Sigmoid colon (tissue), 7 donors: ENCODE measurements at regions of chrX and their contacts with region 1.

Region 1: GRCh38 chrX:119655125-119655524 is 37.8 kb downstream of the SEPTIN6 start:
- DNase-seq: no peak
- H3K4me3 ChIP-seq: no peak overlapping the region
- H3K27ac ChIP-seq: peak overlapping the region in 3 of 4 donors; percentile 63 to 67 (median 66)
- H3K4me1 ChIP-seq: peaks cover 0 to 13% (median 5%) of the 10 kb centered on the region in 4 donors
- H3K27me3 ChIP-seq: no peaks in the 10 kb centered on the region
- CTCF ChIP-seq: no peak
- EP300 ChIP-seq: no peak
- POLR2A ChIP-seq: no peak

Region 2: DNA sequence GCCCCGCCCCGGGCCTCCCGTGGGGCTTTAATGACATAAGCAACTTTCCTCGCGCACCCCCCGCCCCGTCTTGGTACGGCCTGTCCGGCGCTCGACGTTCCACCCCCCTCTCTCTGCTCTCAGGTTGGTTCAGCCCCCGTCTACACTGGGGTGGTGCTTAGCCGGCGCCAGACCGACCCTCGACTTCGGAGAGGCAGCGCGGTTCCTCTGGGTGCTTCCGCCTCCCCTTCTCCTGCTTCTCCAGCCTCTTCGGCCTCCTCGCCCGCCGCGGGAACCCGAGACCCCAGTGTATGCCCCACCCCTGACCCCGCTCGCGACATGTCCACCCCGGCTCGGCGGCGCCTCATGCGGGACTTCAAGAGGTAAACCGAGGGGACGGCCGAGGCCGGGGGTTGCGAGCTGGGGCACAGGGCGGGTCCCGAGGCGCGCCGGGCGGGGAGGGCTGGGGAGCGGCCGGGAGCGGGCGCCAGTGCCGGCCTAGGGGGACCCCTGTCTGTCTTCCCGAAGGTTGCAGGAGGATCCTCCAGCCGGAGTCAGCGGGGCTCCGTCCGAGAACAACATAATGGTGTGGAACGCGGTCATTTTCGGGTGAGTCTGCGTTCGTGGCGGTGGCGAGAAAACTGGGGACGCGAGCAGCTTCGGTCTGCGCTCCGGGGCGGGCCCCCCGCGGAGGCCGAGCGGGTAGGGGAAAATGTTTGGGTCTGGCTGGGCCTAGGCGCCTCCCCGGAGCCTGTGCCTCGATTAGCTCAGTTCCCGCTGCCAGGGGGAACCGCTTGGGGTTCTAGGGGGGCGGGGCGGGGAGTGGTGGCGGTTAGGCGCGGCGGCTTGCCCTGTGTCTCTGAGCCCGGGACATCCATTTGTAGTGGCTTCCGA is 80.5 kb before region 1 on chrX and contains the start of gene UBE2A:
- intact Hi-C with region 1: no loop called
- DNase-seq: peak; percentile 96
- H3K4me3 ChIP-seq: peak within 1 kb of the TSS; percentile 58 to 71 (median 68)
- H3K27ac ChIP-seq: peak within 1 kb of the TSS; percentile 89 to 96 (median 92)
- H3K4me1 ChIP-seq: peaks cover 0 to 15% (median 10%) of the 10 kb centered on the region in 4 donors
- H3K27me3 ChIP-seq: no peaks in the 10 kb centered on the region
- CTCF ChIP-seq: peak in 2 of 4 experiments; percentile 12 to 47
- EP300 ChIP-seq: no peak
- POLR2A ChIP-seq: peak; percentile 56 to 79
- total RNA-seq, gene UBE2A: 26.7 to 51.7 (median 43.1) TPM

Region 3: DNA sequence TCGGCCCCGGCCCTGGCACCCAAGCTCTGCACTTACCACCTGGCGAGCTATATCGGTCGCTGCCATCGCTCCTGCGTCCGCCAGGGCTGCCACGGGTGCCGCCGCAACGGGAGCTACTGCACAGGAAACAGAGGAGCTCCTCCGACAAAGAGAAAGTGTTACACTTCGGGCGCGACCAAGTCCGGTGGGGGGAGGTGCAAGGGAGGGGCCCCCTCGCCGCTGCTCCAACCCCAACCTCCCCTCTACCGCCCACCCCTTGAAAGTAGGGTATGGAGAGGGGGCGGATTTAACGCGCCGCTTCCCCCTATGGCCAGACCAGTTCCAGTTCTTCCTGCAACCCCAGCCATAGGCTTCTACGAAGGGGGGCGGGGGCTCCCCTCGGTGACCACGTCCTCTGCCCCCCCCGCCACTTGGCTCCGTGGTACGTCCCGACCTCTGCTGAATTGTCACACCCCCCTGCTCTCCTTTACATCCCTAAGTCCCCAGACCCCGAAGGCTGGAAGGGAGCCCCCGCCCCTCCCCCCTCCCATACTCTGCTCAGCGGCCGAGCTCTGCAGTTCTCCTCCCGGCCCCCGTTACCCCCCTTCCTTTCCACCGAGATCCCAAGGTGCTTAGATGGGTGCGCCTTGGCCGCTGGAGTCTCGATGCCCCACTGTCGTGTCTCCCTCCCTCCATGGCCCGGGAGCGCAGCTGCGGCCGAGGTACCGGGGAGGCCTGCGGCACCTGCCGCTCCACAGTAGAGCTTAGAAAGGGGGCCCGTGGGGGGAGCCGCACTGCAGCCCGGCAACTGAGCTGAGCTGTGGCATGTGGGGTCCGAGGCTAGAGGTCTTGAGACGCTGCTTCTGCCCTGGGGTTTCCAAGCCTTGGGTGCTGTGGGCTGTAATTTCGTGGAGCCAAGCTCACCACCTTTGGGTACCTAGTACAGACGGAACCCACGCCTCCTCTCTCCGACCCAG is 38.2 kb after region 1 on chrX and contains the start of gene SEPTIN6:
- intact Hi-C with region 1: loop called (anchors 1 kb)
- DNase-seq: peak; percentile 83
- H3K4me3 ChIP-seq: peak within 1 kb of the TSS; percentile 69 to 80 (median 78)
- H3K27ac ChIP-seq: peak within 1 kb of the TSS; percentile 86 to 93 (median 91)
- H3K4me1 ChIP-seq: peaks cover 0 to 20% (median 11%) of the 10 kb centered on the region in 4 donors
- H3K27me3 ChIP-seq: peaks cover 0 to 2% (median 0%) of the 10 kb centered on the region in 3 donors
- CTCF ChIP-seq: no peak
- EP300 ChIP-seq: peak in 1 of 4 donors; percentile 5
- POLR2A ChIP-seq: peak; percentile 41 to 76
- total RNA-seq, gene SEPTIN6: 48.2 to 103 (median 69.4) TPM

Region 4: DNA sequence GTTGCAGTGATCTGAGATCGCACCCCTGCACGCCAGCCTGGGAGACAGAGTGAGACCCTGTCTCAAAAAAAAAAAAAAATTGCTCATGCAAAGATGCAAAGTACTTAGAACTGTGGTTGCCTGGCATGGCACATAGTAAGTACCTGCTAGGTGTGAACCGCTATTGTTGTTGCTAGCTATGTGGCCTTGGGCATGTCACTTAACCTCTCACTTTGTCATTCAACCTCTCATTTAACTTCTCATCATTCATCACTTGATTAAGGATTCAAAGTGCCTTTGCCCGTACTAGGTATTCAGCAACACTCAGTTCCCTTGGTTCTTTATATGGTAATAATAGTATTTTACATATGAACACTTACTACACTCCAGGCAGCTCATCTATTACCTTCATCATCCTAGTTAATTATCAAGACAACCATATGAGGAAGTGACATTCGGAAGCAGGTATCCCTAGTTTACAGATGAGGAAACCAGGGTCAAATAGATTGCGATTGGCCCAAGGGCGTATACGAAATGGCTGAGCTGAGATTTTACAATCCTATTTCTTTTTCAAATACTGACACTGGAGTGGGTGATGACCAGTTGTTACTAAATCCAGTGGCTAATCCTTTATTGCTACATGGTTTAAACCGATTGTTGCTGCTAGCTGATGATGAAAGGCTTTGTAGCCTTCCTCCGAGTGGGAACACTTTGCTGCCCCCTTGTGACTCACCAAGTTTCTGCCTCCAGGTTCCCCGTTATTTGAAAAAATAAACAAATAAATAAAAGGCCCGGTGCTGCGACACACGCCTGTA is 74.5 kb after region 1 on chrX:
- intact Hi-C with region 1: loop called (anchors 2 kb)
- DNase-seq: peak; percentile 77
- H3K4me3 ChIP-seq: no peak overlapping the region
- H3K27ac ChIP-seq: no peak overlapping the region
- H3K4me1 ChIP-seq: no peaks in the 10 kb centered on the region
- H3K27me3 ChIP-seq: no peaks in the 10 kb centered on the region
- CTCF ChIP-seq: peak; percentile 23 to 47 (median 36)
- EP300 ChIP-seq: no peak
- POLR2A ChIP-seq: no peak

Region 5: GRCh38 chrX:120749141-120749846 is 1094.2 kb after region 1 on chrX:
- intact Hi-C with region 1: no loop called
- DNase-seq: no peak
- H3K4me3 ChIP-seq: no peak overlapping the region
- H3K27ac ChIP-seq: no peak overlapping the region
- H3K4me1 ChIP-seq: no peaks in the 10 kb centered on the region
- H3K27me3 ChIP-seq: no peaks in the 10 kb centered on the region
- CTCF ChIP-seq: no peak
- EP300 ChIP-seq: no peak
- POLR2A ChIP-seq: no peak